PC-3 (cell line): ENCODE measurements at regions of chr22 and their contacts with region 1.

Region 1: GRCh38 chr22:20418211-20418788 is 19.3 kb downstream of the SCARF2 start:
- DNase-seq: peak; percentile 71
- ATAC-seq: peak; percentile 91
- H3K4me3 ChIP-seq: peak overlapping the region; percentile 73
- H3K27ac ChIP-seq: no peak overlapping the region
- H3K4me1 ChIP-seq: no peaks in the 10 kb centered on the region
- H3K27me3 ChIP-seq: no peaks in the 10 kb centered on the region
- CTCF ChIP-seq: peak; percentile 68

Region 2: GRCh38 chr22:20211997-20212753 is 206.1 kb before region 1 on chr22:
- CTCF ChIA-PET with region 1: no interaction called
- POLR2A ChIA-PET with region 1: no interaction called
- intact Hi-C with region 1: no loop called
- DNase-seq: no peak
- ATAC-seq: no peak
- H3K4me3 ChIP-seq: no peak overlapping the region
- H3K27ac ChIP-seq: no peak overlapping the region
- H3K4me1 ChIP-seq: peaks cover 2% of the 10 kb centered on the region; the same call in 1 of the 2 replicates
- H3K27me3 ChIP-seq: no peaks in the 10 kb centered on the region
- CTCF ChIP-seq: no peak

Region 3: DNA sequence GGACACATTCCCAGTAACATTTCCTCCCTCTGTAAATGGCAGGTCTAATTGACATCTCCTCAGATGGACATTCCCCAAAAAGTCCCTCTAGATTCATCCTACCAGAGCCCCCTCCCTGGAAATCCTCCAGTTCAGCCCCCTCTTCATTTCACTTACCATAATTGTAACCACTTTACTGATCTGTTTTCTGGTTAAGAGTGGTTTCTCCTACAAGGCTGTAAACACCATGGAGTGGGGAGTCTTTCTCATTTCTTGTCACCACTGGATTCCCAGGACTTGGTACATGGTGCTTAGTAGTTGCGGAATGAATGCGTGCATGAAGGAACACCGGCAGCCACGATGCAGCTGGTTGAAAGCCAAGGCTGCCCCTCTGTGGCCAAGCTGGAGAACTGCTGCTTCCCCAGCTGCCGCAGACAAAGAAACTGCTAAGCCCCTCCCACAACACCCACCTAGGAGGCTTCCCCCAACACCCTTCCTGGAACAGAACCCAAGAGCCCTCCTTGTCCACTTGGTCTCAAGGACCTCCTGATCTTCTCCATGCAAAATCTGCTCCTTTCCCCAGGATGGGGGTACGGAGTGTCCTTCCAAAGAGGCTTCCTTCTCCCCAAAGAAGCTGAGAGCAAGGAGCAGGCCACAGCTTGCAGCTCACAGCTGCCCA is 37.9 kb after region 1 on chr22:
- CTCF ChIA-PET with region 1: interaction called, 22 read pairs
- POLR2A ChIA-PET with region 1: no interaction called
- intact Hi-C with region 1: loop called (anchors 1 kb)
- DNase-seq: peak; percentile 65
- ATAC-seq: peak; percentile 72
- H3K4me3 ChIP-seq: no peak overlapping the region
- H3K27ac ChIP-seq: no peak overlapping the region
- H3K4me1 ChIP-seq: no peaks in the 10 kb centered on the region
- H3K27me3 ChIP-seq: no peaks in the 10 kb centered on the region
- CTCF ChIP-seq: peak; percentile 73

Region 4: DNA sequence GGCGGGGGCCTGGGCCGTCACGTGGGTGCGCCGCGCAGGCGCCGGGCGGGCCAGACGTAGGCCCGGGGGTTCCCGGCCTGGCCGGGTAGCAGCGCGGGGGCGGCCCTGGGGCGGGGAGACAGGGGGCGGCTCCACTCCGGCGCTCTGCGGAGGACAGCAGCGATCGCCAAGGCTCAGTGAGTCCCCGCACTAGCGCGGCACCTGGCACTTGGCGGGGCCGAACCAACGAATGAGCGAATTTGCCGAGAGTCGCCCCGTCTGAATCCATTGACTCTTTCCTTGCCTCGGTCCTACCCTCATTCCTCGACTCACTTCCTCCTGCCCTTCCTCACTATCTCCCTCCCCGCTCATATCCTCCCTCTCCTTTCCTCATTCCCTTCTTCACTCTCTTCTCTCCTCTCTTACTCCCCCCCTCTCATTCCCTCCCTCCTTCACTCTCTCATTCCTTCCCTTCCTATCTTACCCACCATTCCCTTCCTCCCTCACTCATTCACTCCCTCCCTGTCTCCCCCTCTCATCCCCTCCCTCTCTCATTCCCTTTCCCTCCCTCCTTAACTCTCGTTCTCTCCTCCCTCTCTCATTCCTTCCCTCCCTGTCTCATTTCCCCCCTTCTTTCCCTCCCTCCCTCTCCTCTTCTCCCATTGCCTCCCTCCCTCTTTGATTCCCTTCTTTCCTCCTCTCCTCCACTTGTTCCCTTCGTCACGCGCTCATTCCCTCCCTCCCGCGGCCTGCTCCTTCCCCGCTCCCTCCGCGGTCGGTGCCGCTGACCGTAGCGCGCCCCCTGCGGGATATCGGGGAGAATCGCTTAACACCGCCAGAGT is 77.8 kb after region 1 on chr22:
- CTCF ChIA-PET with region 1: interaction called, 5 read pairs
- POLR2A ChIA-PET with region 1: no interaction called
- intact Hi-C with region 1: loop called (anchors 10 kb)
- DNase-seq: peak; percentile 79
- ATAC-seq: peak; percentile 83
- H3K4me3 ChIP-seq: peak overlapping the region; percentile 74
- H3K27ac ChIP-seq: peak overlapping the region; percentile 80
- H3K4me1 ChIP-seq: peaks cover 25% of the 10 kb centered on the region
- H3K27me3 ChIP-seq: no peaks in the 10 kb centered on the region
- CTCF ChIP-seq: peak; percentile 84

Region 5: DNA sequence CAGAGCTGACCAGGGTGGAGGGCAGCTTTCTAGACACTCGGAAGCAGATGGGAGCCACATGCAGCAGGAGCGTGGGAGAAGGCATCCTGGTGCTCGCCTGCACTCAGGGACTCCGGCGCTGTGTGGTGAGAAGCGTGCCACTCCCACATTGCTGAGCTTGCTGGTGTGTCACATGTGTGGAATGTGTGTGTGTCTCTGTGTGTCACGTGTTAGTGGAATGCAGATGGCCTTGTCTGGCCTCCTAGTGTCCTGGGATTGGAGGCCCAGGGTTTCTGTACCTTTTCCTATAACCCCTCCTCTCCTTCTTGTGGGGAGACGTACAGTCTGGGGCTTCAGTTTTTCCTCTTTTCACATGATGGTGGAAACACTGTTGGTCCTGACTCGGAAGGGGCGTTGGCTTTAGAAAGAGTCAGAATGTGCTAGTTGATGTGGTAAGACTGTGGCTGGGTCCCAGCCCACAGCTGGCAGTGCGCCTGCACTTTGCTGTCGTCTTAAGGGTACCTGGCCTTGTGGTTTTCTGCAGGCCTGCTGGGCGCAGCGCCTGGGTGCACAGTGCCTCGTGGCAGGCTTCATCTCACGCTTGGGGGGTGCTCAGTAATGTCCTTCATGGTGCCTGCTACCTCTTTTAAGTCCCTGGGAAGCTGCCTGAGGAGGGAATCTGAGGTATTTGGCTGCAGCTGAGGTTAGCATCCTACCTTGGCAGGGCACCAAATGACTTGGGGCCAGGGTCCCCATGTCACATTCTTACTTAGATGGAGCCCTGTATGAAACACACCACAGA is 150.9 kb after region 1 on chr22:
- CTCF ChIA-PET with region 1: interaction called, 17 read pairs
- POLR2A ChIA-PET with region 1: no interaction called
- intact Hi-C with region 1: no loop called
- DNase-seq: peak; percentile 90
- ATAC-seq: peak; percentile 73
- H3K4me3 ChIP-seq: no peak overlapping the region
- H3K27ac ChIP-seq: peak overlapping the region; percentile 89
- H3K4me1 ChIP-seq: peaks cover 61% of the 10 kb centered on the region
- H3K27me3 ChIP-seq: no peaks in the 10 kb centered on the region
- CTCF ChIP-seq: no peak